Astrocyte of the cerebellum (primary cell): ENCODE measurements at regions of chr6 and their contacts with region 1.

Region 1: GRCh38 chr6:148835920-148836441 is 89.2 kb downstream of the UST start:
- DNase-seq: peak; percentile 78
- H3K4me3 ChIP-seq: no peak overlapping the region
- CTCF ChIP-seq: no peak

Region 2: DNA sequence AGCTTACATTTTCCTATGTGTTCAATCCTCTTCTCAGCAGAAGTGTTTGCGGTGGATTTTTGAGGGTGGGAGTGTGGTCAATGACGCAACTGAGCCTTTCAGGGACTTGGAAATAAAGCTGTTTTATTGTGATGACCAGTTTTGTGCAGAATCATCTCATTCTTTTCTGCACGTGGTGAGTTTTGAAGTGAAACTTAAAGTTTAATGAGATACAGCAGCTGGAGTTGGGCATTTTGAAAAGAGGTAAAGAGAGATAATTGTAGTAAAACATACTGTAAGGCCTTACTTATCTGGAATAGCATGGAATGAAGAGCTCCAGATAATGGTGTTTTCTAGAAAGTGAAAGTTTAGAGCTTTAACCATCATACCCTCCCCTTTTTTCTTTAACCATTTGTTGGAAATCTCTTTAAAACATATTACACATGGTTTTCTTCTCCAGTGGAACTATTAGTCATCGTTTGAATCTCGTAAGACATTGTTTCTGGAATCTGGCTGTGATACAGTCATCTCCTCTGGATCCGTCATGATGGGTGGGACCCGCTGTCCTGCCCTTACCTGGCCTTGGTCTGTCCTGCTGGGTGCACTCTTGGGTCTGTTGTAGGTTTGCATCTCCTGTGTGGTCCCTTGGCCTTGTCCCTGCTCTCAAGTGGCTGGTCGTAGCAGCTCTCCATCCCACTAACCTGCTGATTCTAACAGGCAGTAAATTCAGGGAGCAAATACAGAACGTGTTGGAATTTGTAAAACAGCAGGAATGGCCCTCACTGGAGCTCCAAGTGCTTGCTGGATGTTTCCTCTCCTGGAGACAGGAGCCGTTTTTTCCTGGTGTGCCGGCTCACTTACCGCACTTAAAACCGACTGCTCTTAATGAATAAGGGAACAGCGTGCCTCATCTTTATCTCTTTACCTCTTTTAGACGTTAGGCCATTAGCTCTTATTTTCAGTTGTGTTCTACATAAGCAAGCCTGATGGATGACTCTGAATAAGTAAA is 59.4 kb before region 1 on chr6:
- in situ Hi-C with region 1: no loop called
- DNase-seq: peak; percentile 48
- H3K4me3 ChIP-seq: no peak overlapping the region
- CTCF ChIP-seq: no peak

Region 3: GRCh38 chr6:148799646-148800045 is 36.3 kb before region 1 on chr6:
- in situ Hi-C with region 1: loop called (anchors 5 kb)
- DNase-seq: no peak
- H3K4me3 ChIP-seq: no peak overlapping the region
- CTCF ChIP-seq: no peak